Activated CD8-positive, alpha-beta T cell treated with anti-CD3 and anti-CD28 coated beads, Interleukin-2, amount 10 ng/mL, durations not matched to agents 7 days and 5 days (primary cell): ENCODE measurements at regions of chr1 and their contacts with region 1.

Region 1: GRCh38 chr1:171715813-171716251 is 26.0 kb downstream of the VAMP4 start:
- DNase-seq: no peak
- ATAC-seq: no peak
- H3K4me3 Mint-ChIP-seq: no peak overlapping the region
- H3K27ac Mint-ChIP-seq: no peak overlapping the region
- H3K4me1 Mint-ChIP-seq: no peaks in the 10 kb centered on the region
- H3K27me3 Mint-ChIP-seq: no peaks in the 10 kb centered on the region

Region 2: DNA sequence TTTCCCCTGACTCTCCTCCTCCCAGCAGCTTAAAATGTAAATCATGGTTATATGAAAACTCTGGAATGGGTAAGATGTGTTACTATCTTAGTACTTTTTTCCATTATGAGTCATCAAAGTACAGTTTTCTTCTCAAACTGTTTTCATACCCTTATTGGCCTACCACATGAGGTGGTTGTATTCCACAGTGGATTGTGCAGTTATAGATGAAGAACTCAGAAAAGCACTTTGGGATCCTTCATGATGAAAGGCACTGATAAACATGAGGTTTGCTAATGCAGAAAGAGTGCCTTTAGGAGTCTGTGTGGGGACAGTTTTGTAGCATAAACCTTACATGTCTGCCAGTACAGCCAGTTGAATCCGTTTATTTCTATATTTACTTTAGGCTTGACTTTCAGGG is 125.8 kb before region 1 on chr1:
- CTCF ChIA-PET with region 1: no interaction called
- POLR2A ChIA-PET with region 1: no interaction called
- DNase-seq: no peak
- ATAC-seq: no peak
- H3K4me3 Mint-ChIP-seq: no peak overlapping the region
- H3K27ac Mint-ChIP-seq: no peak overlapping the region
- H3K4me1 Mint-ChIP-seq: no peaks in the 10 kb centered on the region
- H3K27me3 Mint-ChIP-seq: no peaks in the 10 kb centered on the region

Region 3: GRCh38 chr1:171654942-171655745 is 60.7 kb before region 1 on chr1:
- CTCF ChIA-PET with region 1: interaction called, 29 read pairs
- POLR2A ChIA-PET with region 1: no interaction called
- DNase-seq: peak; percentile 76
- ATAC-seq: peak; percentile 78
- H3K4me3 Mint-ChIP-seq: no peak overlapping the region
- H3K27ac Mint-ChIP-seq: no peak overlapping the region
- H3K4me1 Mint-ChIP-seq: peaks cover 13% of the 10 kb centered on the region
- H3K27me3 Mint-ChIP-seq: peaks cover 32% of the 10 kb centered on the region

Region 4: GRCh38 chr1:171781176-171781875 is 65.5 kb after region 1 on chr1 and contains the start of gene METTL13:
- CTCF ChIA-PET with region 1: no interaction called
- POLR2A ChIA-PET with region 1: no interaction called
- DNase-seq: peak; percentile 99
- ATAC-seq: peak; percentile 98
- H3K4me3 Mint-ChIP-seq: peak within 1 kb of the TSS; percentile 95
- H3K27ac Mint-ChIP-seq: peak within 1 kb of the TSS; percentile 96
- H3K4me1 Mint-ChIP-seq: peaks cover 58% of the 10 kb centered on the region
- H3K27me3 Mint-ChIP-seq: no peaks in the 10 kb centered on the region
- total RNA-seq, gene METTL13: 38.5 to 44.5 TPM